ENCODE measurements at regions of chr3 and their contacts with region 1.

Region 1: GRCh38 chr3:186241910-186242821 is 119.9 kb downstream of the DGKG start:
- DNase-seq: peak; percentile 83
- H3K4me3 ChIP-seq: peak overlapping the region; percentile 14 to 35 (median 28)
- H3K27ac ChIP-seq: peak overlapping the region; percentile 5
- H3K4me1 ChIP-seq: peaks cover 8% of the 10 kb centered on the region
- H3K27me3 ChIP-seq: no peaks in the 10 kb centered on the region
- CTCF ChIP-seq: peak; percentile 56 to 75

Region 2: DNA sequence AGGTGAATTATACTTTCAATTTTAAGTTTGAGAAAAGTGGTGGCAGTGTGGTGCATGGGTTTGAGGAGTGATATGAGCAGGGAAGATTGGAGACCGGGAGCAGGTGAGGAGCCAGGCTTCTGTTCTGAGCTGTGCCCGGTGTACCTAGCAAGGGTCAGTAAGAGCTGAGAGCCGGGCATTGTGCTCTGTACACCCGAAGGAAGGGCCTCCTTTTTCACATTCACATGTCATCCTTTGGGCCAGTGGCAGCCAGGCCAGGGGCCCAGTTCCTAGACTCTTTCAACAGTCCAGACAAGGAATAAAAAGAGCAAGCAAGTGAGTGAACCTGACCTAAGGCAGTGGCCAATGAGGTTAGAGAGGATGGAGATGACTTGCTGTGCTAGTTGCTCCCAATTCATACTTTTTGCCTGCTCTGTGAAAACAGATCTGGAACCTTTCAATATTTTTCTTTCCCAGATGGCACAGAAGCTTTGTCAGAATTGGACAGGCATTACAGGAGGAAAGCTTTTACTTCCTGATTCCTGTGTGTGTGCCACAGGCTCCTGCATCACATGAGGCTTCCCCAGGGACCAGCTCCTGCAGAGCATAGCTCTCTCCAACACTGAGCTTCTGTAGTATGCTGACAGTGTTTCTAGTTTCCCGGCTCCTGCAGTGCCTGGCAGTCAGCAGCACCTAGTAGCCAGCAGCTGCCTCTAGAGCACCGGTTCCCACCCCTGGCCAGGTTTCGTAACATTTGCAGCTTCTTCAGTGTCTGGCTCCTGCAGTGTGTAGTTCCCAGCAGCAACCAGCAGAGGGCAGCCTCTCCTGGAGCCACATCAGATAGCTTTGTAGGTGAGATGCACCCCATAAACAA is 299.0 kb before region 1 on chr3:
- CTCF ChIA-PET with region 1: no interaction called
- dilution Hi-C with region 1: no loop called
- in situ Hi-C with region 1: no loop called
- intact Hi-C with region 1: loop called (anchors 1 kb)
- DNase-seq: peak; percentile 81
- H3K4me3 ChIP-seq: no peak overlapping the region
- H3K27ac ChIP-seq: no peak overlapping the region
- H3K4me1 ChIP-seq: peaks cover 21% of the 10 kb centered on the region
- H3K27me3 ChIP-seq: peaks cover 2% of the 10 kb centered on the region
- CTCF ChIP-seq: peak; percentile 97 to 99

Region 3: DNA sequence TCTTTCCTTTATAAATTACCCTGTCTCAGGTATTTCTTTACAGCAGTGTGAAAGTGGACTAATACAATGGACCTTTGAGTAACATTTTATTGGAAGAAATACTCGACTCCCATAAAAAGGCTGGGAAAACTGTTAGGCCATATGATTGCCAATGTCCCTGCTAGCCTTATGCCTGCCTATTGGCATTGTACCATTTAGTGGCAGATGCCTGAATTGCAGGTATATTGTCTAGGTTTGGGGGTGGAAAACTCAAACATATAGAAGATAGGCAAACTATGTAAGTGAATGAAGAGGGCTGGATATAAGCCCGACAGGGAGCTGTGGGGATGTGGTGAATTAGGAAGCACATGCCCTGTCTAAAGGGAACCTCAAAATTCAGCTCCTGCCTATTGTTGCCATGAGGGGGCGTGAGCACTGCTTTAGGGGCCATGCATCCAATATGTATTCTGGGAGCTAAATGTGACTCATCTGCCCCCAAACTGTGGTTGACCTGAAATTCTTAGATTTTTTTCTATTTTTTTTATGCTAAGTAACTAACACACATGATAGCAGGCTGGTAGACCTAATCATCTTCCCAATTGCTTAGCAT is 239.2 kb before region 1 on chr3:
- CTCF ChIA-PET with region 1: no interaction called
- dilution Hi-C with region 1: no loop called
- in situ Hi-C with region 1: no loop called
- intact Hi-C with region 1: loop called (anchors 1 kb)
- DNase-seq: peak; percentile 41
- H3K4me3 ChIP-seq: no peak overlapping the region
- H3K27ac ChIP-seq: no peak overlapping the region
- H3K4me1 ChIP-seq: no peaks in the 10 kb centered on the region
- H3K27me3 ChIP-seq: no peaks in the 10 kb centered on the region
- CTCF ChIP-seq: peak in 1 of 2 donors; percentile 51

Region 4: DNA sequence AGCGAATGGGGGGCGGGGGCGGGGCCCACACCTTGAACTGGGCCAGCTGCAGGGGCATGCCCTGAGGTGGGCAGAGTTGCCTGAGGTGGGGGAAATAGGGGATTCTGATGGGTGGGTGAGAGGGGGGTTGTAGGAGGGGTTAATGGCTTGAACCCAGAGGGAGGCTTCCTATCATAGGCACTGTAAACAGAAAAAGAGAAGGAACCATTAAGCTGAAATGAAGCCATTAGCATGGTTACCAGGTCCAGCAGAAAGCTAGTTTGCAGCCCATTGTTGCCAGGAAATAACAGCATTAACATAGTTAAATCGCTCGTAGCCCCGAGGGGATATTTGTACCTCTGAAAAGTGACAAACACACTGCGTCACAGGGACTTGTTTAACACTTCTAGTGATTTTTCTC is 162.2 kb before region 1 on chr3:
- CTCF ChIA-PET with region 1: no interaction called
- dilution Hi-C with region 1: no loop called
- in situ Hi-C with region 1: no loop called
- intact Hi-C with region 1: loop called (anchors 5 kb)
- DNase-seq: no peak
- H3K4me3 ChIP-seq: no peak overlapping the region
- H3K27ac ChIP-seq: no peak overlapping the region
- H3K4me1 ChIP-seq: peaks cover 11% of the 10 kb centered on the region
- H3K27me3 ChIP-seq: no peaks in the 10 kb centered on the region
- CTCF ChIP-seq: no peak

Region 5: DNA sequence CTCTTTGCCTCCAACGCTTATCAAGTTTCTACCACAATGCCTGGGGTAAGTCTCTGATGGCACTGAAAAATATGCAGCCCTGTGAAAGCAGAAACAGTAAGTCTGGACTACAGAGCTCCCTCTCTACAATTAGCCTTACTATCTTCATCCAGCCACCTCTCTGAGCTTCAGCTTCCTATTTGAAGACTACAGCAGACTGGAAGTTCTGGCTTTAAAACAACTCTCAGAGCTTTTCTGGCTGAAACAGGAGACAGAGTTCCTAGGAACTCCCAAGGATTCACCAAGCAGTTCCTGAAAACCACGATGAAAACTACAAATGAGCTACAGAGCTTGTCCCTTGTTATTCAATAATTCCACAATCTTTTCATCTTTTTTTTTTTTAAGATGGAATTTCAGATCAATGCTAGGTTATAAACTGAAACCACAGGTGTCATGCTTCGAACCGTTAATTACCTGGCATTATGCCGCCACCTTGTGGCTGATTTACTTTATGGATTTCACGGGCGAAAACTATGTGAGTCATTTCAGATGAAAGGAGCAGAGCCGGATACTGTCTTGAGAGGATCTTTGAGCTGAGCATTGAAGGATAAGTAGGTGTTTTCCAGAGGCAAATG is 298.2 kb after region 1 on chr3:
- CTCF ChIA-PET with region 1: interaction called, 13 read pairs
- dilution Hi-C with region 1: no loop called
- in situ Hi-C with region 1: no loop called
- intact Hi-C with region 1: loop called (anchors 1 kb)
- DNase-seq: peak; percentile 78
- H3K4me3 ChIP-seq: no peak overlapping the region
- H3K27ac ChIP-seq: peak overlapping the region; percentile 4
- H3K4me1 ChIP-seq: peaks cover 17% of the 10 kb centered on the region
- H3K27me3 ChIP-seq: no peaks in the 10 kb centered on the region
- CTCF ChIP-seq: peak; percentile 64 to 66